SK-N-SH (cell line): ENCODE measurements at regions of chr2 and their contacts with region 1.

Region 1: DNA sequence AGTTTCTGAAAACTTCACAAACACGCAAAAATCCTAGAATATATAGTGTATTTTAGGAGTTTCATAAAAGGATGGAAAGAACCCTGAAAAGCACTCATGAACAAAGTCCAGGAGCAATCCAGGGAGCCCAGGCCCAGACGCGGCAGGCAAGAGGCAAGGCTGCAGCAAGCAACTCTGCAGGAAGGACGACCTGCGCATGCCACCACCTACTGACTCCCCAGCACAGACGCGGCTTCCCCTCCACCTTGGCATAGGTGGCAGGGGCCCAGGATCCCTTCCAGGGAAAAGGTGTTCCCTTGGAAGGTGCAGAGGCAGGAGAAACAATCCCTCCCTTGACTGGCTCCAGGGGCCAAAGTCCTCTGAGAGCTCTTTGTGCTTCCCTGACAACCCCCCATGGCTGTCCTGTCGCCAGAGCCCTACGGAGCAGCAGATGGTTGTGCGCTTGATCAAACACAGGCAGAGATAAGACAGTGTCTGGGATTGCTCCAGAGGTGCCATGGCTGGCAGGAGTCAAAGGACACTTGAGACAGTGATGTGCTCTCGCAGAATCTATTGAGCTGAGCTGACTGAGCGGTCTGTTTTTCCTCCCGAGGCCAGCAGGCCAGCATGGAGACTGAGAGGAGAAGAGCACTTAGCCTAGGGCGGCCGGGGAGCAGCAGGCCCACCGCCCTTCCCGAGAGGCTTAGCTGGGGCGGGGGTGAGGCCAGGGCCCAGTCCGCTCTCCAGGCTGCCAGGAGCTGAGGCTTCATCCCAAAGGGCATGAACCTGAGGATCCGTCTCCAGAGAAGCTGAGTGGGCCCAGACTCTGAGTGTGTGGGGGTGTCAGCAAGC is 10.8 kb upstream of the AMER3 start:
- DNase-seq: peak; percentile 89
- H3K4me3 ChIP-seq: no peak overlapping the region; a peak in 1 of 4 replicates
- H3K27ac ChIP-seq: peak overlapping the region in 1 of 2 experiments; percentile 95; a peak in 2 of 4 replicates
- H3K4me1 ChIP-seq: peaks cover 0 to 16% of the 10 kb centered on the region in 2 experiments; a peak in 2 of 4 replicates
- H3K27me3 ChIP-seq: no peaks in the 10 kb centered on the region
- CTCF ChIP-seq: no peak
- EP300 ChIP-seq: peak in 1 of 2 experiments; percentile 95; a peak in 2 of 4 replicates
- RAD21 ChIP-seq: 0 out of 2 replicates have a peak, but pooled peaks have one; percentile 13

Region 2: DNA sequence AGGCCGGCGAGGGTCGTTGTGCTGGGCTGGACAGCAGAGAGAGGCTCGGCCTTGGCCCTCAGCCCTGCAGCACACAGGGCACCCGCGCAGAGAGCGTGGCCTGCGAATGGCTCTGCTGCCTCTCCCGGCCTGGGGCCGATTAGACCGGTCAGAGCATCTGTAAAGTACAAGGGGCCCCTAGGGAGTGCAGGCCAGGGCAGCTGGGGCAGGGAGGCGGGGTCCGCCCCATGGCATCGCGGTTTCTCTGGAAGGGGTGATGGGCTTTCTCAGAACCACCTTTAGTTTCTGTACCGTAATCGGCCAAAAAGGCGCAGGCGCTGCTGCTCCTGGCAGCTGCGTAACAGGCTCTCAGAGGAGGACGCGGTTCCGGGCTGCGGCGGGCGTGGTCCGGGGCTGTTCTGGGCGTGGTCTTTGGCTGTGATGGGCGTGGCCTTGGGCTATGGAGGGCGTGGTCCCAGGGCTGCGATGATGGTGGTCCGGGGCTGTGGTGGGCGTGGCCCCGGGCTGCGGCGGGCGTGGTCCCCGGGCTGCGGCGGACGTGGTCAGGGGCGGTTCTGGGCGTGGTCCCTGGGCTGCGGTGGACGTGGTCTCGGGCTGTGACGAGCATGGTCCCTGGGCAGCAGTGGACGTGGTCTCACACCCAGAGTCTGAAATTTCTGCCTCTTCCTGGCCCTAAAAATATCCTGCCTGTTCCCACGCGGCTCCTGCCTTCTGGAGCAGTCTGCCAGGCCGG is 17.1 kb before region 1 on chr2:
- CTCF ChIA-PET with region 1: interaction called, 5 read pairs
- POLR2A ChIA-PET with region 1: interaction called, 20 read pairs
- DNase-seq: peak; percentile 96
- H3K4me3 ChIP-seq: peak overlapping the region; percentile 46 to 62
- H3K27ac ChIP-seq: peak overlapping the region in 1 of 2 experiments; percentile 64; a peak in 2 of 4 replicates
- H3K4me1 ChIP-seq: peaks cover 0 to 25% of the 10 kb centered on the region in 2 experiments; a peak in 2 of 4 replicates
- H3K27me3 ChIP-seq: no peaks in the 10 kb centered on the region
- CTCF ChIP-seq: no peak
- EP300 ChIP-seq: no peak
- RAD21 ChIP-seq: peak; percentile 16; the same call in 1 of the 2 replicates